Activated CD8-positive, alpha-beta memory T cell treated with anti-CD3 and anti-CD28 coated beads, Interleukin-2, amount 10 ng/mL, durations not matched to agents 7 days and 5 days (primary cell): ENCODE measurements at regions of chr21 and their contacts with region 1.

Region 1: GRCh38 chr21:31180256-31181081 is 142.2 kb upstream of the KRTAP19-8 start:
- DNase-seq: no peak
- ATAC-seq: no peak
- H3K4me3 Mint-ChIP-seq: peak overlapping the region; percentile 34
- H3K27ac Mint-ChIP-seq: peak overlapping the region; percentile 75
- H3K4me1 Mint-ChIP-seq: peaks cover 49% of the 10 kb centered on the region
- H3K27me3 Mint-ChIP-seq: peaks cover 11% of the 10 kb centered on the region

Region 2: DNA sequence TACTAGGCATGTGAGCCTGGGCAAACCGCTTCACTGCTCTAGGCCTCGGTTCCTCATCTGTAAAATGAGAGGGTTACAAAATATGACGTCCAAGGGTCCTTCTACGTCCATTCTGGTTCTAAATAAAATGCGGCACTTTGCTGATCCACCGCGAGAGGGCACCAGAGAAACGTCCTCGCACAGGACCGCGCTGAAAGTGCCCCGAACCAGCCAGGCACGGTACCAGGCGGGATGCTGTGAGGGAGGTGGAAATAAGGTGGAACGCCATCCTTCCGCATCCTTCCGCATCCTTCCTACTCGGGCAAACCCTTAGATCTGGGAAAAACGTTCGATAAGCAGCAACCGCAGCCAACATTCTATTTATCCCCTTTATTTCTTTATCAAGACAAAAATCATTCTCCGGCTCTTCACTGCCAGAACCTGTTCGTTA is 81.9 kb before region 1 on chr21:
- CTCF ChIA-PET with region 1: interaction called, 44 read pairs
- DNase-seq: peak; percentile 75
- ATAC-seq: peak; percentile 79
- H3K4me3 Mint-ChIP-seq: no peak overlapping the region
- H3K27ac Mint-ChIP-seq: no peak overlapping the region
- H3K4me1 Mint-ChIP-seq: peaks cover 18% of the 10 kb centered on the region
- H3K27me3 Mint-ChIP-seq: peaks cover 39% of the 10 kb centered on the region

Region 3: DNA sequence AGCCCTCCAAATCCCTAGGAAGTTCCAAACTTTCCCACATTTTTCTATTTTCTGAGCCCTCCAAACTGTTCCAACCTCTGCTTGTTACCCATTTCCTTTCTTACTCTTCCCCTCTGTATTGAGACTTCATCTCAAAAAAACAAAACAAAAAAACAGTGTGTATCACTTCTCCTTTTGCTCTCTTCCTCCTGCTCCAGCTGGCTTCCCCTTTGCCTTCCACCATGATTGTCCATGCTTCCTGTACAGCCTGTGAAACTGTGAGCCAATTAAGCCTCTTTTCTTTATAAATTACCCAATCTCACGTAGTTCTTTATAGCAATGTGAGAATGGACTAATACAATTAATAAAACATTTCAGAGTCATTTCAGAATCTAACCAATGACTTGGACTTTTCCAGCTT is 72.6 kb before region 1 on chr21:
- CTCF ChIA-PET with region 1: interaction called, 33 read pairs
- DNase-seq: no peak
- ATAC-seq: no peak
- H3K4me3 Mint-ChIP-seq: no peak overlapping the region
- H3K27ac Mint-ChIP-seq: no peak overlapping the region
- H3K4me1 Mint-ChIP-seq: peaks cover 15% of the 10 kb centered on the region
- H3K27me3 Mint-ChIP-seq: peaks cover 36% of the 10 kb centered on the region

Region 4: DNA sequence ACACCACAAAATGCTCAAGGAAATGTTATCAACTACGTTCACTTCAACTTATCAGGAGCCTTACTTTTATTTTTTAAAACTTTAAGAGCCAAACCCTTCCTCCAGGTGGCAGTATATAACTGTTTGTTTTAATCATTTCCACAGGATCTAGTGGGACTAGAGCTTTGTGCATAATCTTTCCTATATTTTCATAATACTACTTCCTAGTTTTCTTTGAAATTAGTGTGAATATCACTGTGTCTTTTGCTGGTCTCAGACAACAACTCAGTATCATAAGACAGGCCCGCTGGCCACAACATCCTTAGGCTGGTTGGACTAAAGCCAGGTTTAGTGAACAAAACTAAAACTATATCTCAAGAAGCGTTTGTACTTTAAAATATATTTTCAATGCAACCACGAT is 18.1 kb after region 1 on chr21:
- CTCF ChIA-PET with region 1: interaction called, 10 read pairs
- DNase-seq: no peak
- ATAC-seq: no peak
- H3K4me3 Mint-ChIP-seq: no peak overlapping the region
- H3K27ac Mint-ChIP-seq: no peak overlapping the region
- H3K4me1 Mint-ChIP-seq: peaks cover 24% of the 10 kb centered on the region
- H3K27me3 Mint-ChIP-seq: peaks cover 20% of the 10 kb centered on the region

Region 5: GRCh38 chr21:31580866-31581276 is 400.4 kb after region 1 on chr21:
- CTCF ChIA-PET with region 1: interaction called, 20 read pairs
- DNase-seq: peak; percentile 79
- ATAC-seq: peak; percentile 79
- H3K4me3 Mint-ChIP-seq: no peak overlapping the region
- H3K27ac Mint-ChIP-seq: no peak overlapping the region
- H3K4me1 Mint-ChIP-seq: no peaks in the 10 kb centered on the region
- H3K27me3 Mint-ChIP-seq: peaks cover 29% of the 10 kb centered on the region